Tibial artery (tissue), 4 donors: ENCODE measurements at regions of chr1 and their contacts with region 1.

Region 1: GRCh38 chr1:235328357-235329138 is at the start of gene GGPS1:
- DNase-seq: peak; percentile 97 to 99
- H3K4me3 ChIP-seq: peak within 1 kb of the TSS; percentile 77 to 98
- H3K27ac ChIP-seq: peak within 1 kb of the TSS; percentile 96
- H3K4me1 ChIP-seq: peaks cover 0 to 63% (median 55%) of the 10 kb centered on the region in 4 donors
- H3K27me3 ChIP-seq: no peaks in the 10 kb centered on the region
- CTCF ChIP-seq: no peak

Region 2: DNA sequence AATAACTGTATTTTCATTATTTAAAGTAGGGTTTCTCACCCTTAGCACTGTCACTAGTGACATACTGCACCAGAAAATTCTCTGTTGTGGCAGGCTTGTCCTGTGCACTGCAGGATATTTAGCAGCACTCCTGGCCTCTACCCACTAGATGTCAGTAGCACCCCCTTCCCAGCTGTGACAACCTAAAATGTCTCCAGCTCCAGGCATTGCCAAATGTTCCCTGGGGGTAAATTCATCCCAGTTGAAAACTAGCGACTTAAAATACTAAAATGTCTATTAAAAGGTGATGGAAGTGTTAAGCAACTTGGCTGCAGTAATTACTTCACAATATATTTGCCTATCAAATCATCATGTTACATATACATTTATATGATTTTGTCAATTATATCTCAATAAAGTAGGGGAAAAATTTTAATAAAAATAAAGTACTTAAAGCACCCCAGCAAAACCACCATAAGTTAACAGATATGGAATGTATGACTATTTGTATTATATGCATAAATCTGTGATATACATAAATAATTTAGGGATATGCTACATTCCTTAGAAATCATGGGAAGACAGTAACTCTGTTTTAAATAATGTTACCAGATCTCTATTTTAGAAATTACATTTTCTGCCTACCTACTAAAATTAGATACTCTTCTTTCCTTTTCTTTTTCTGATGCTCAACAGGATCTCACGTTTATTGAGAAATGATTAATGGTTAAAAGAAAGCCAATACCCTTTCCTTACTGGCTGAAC is 75.2 kb before region 1 on chr1:
- intact Hi-C with region 1: loop called (anchors 10 kb)
- DNase-seq: peak in 1 of 2 donors; percentile 43
- H3K4me3 ChIP-seq: no peak overlapping the region
- H3K27ac ChIP-seq: no peak overlapping the region
- H3K4me1 ChIP-seq: peaks cover 0 to 7% (median 2%) of the 10 kb centered on the region in 4 donors
- H3K27me3 ChIP-seq: no peaks in the 10 kb centered on the region
- CTCF ChIP-seq: peak; percentile 72 to 82

Region 3: GRCh38 chr1:235367000-235367908 is 38.7 kb after region 1 on chr1 and contains the start of gene TBCE:
- intact Hi-C with region 1: loop called (anchors 2 kb)
- DNase-seq: peak; percentile 97 to 98
- H3K4me3 ChIP-seq: peak within 1 kb of the TSS; percentile 62 to 72
- H3K27ac ChIP-seq: peak within 1 kb of the TSS; percentile 72 to 81
- H3K4me1 ChIP-seq: peaks cover 0 to 10% (median 2%) of the 10 kb centered on the region in 4 donors
- H3K27me3 ChIP-seq: no peaks in the 10 kb centered on the region
- CTCF ChIP-seq: peak in 1 of 2 experiments; percentile 15

Region 4: GRCh38 chr1:235415008-235415904 is 86.7 kb after region 1 on chr1:
- intact Hi-C with region 1: loop called (anchors 2 kb)
- DNase-seq: peak; percentile 58 to 75
- H3K4me3 ChIP-seq: no peak overlapping the region
- H3K27ac ChIP-seq: no peak overlapping the region
- H3K4me1 ChIP-seq: peaks cover 0 to 5% (median 4%) of the 10 kb centered on the region in 4 donors
- H3K27me3 ChIP-seq: no peaks in the 10 kb centered on the region
- CTCF ChIP-seq: peak; percentile 56 to 63